ENCODE measurements at regions of chr1 and their contacts with region 1.

Region 1: DNA sequence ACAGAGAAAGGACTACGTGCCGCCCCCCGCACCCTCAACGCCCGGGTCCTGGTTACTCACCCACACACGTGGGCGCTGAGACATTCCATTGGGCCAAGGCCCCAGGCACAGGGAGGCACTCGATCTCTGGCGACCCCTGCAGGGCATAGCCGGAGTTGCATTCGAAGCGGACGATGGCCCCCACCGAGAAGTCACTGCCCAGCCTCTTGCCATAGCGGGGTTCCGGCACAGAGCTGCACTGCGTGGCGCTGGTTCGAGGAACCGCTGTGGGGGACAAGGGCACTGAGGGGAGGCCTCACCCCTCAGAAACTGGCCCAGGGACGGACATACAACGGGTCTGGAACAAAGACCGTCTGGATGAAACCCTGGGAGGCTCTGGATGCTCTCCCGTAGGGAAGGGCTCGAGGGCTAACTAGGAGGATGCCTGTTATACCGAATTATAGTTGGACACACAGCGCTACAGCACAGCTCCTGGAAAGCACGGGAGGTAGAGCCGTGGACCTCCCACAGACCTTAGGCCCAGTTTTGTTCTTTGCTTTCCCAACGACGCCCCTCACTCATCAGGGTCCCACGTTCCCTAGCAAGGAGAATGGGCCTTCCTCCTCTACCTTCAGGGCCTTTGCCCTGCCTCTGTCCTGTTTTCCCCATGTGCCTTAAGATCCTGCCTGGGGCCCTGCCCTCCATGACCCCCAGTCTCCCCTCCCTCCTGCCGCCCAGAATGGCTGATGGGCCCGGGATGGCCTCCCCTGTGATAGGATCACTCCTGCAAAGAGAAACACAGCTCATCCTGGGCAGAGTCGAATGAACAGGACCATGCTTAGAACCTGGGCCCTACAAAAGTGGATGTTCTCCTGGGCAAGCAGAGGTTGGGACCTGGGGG is 152.8 kb downstream of the ZSCAN20 start:
- DNase-seq: peak; percentile 15

Region 2: DNA sequence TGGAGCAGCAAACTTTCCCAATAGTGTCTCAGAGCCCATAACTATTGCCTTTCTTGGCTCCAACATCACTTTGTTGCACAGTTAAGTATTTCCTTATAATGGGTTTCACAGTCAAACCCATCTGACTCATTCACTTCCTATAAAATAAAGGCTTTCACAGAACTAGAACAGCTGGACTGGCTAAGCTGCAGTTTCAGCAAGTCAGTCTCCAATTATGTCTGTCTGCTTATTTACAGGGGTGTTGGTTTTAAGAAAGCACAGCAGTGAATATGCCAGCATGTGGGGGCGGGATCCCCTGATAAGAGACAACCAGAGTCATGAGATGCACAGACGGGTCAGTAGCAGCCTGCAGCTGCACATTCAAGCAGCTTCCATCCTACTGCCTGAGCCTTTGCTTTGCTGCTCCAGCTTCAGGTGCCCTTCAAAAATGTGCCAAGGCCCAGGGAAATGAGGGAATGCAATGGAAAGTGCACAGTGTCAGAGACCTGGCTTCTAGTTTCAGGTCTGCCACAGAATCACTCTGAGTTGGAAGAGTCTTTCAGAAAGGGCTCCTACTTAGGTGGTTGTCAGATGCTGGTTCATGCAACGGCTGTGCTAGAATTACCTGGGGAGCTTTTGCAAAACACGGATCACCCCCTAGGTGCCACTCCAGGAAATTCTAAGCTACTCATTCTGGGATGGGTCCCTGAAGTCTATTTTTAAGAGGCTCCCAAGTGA is 685.4 kb before region 1 on chr1:
- in situ Hi-C with region 1: loop called (anchors 25 kb)
- DNase-seq: no peak

Region 3: DNA sequence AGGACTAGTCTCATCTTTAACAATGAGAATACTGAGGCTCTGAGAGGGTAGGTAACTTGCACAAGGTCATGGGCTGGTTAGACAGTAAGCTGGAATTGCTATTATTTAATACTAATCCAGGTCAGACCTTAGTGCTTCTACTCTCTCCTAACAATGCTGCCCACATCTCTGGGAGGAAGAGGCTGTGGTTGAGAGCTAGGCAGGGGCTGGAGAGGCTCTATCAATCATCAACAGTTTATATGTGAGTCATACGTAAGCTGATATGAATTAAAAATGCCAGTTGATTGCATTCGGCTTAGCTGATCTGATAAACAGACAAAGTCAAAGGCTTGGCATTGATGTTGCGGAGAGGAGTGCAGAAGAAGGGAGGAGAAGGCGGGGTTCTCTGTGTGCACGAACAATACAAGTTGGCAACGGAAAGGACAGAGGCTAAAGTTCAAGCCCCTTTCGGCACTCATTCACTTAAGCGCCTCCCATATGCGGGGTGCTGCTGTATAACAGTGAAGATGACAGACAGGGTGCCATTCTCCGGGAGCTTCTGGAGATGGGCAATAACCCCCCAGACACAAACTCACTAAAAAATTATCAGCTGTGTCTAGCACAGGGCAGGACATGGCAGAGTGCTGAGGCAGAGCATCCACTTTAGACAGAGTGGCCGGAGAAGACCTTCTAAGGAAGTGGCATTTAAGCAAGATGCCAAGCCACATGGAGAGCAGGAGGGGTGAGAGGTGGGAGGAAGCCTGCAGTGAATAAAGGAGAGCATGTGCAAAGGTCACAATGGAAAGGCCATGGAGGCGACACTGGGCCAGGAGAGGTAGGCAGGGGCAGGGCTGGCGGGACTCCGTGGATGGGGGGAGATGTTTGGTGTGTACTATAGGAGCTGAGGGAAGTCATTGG is 42.4 kb after region 1 on chr1:
- in situ Hi-C with region 1: no loop called
- DNase-seq: no peak

Measured in KBM-7 (cell line).